Activated T-helper 1 cell treated with anti-CD3 and anti-CD28 coated beads, Interleukin-12 subunit alpha, Interleukin-12 subunit beta, Interleukin-2, Interleukin-4 antibody, amounts not matched to agents 30 ng/mL and 10 ng/mL and 1 ng/mL, durations not matched to agents 14 hours and 24 hours and 36 hours (primary cell): ENCODE measurements at regions of chr4 and their contacts with region 1.

Region 1: DNA sequence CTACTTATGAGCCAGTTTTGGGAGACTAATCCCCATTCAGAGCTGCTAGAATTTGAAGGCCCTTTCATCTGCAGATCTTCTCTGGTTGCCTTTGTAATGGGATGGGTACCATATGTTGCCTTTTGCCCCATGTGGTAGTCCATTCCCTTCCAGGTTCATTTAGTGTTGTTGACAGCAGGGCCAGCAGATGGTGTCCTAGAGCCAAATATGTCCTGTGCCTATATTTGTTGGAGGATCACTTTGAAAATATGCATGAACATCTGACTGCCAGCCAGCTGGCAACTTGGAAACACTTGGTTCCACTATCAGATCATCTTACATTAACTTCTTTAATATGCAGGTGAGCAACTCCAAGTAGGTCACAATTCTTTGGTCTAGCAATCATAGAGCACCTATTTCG is 30.4 kb downstream of the CFAP299 start:
- DNase-seq: peak; percentile 19
- H3K4me3 Mint-ChIP-seq: no peak overlapping the region
- H3K27ac Mint-ChIP-seq: no peak overlapping the region
- H3K4me1 Mint-ChIP-seq: no peaks in the 10 kb centered on the region
- H3K27me3 Mint-ChIP-seq: peaks cover 4% of the 10 kb centered on the region

Region 2: GRCh38 chr4:80343887-80344286 is 22.0 kb before region 1 on chr4:
- intact Hi-C with region 1: no loop called
- DNase-seq: no peak
- H3K4me3 Mint-ChIP-seq: no peak overlapping the region
- H3K27ac Mint-ChIP-seq: no peak overlapping the region
- H3K4me1 Mint-ChIP-seq: no peaks in the 10 kb centered on the region
- H3K27me3 Mint-ChIP-seq: peaks cover 12% of the 10 kb centered on the region

Region 3: GRCh38 chr4:80812145-80812544 is 446.2 kb after region 1 on chr4:
- intact Hi-C with region 1: loop called (anchors 10 kb)
- DNase-seq: no peak
- H3K4me3 Mint-ChIP-seq: no peak overlapping the region
- H3K27ac Mint-ChIP-seq: no peak overlapping the region
- H3K4me1 Mint-ChIP-seq: no peaks in the 10 kb centered on the region
- H3K27me3 Mint-ChIP-seq: no peaks in the 10 kb centered on the region

Region 4: DNA sequence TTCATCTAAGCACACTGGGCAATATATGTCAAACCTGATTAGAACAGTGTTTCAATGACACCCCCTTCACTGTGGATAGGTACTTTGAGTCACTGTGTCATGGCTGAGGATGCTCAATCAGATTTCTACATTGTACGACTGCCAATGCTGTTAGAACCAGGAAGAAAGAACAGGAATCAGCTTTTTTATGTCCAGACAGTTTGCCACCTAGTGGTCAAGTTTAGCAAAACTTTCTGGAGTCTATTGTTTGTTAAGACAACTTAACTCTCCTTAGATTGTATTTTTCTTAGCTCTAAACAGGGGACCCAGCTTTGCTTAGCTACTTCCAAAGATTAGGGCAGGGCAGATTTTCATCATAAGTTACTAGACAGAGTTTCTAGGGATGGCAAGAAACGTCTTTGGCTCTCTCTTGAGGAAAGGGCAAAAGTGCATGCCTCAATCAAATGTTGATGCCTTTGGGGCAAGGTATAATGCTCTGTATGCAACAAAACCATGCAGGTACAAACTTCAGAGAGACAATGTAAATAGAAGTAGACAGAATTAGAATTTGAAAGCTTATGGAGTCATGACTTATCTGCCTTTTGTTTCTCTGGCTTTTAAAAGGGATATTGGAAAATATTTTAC is 624.1 kb after region 1 on chr4:
- intact Hi-C with region 1: loop called (anchors 1 kb)
- DNase-seq: no peak
- H3K4me3 Mint-ChIP-seq: no peak overlapping the region
- H3K27ac Mint-ChIP-seq: no peak overlapping the region
- H3K4me1 Mint-ChIP-seq: no peaks in the 10 kb centered on the region
- H3K27me3 Mint-ChIP-seq: no peaks in the 10 kb centered on the region

Region 5: GRCh38 chr4:81040012-81040659 is 674.2 kb after region 1 on chr4:
- intact Hi-C with region 1: loop called (anchors 2 kb)
- DNase-seq: no peak
- H3K4me3 Mint-ChIP-seq: no peak overlapping the region
- H3K27ac Mint-ChIP-seq: no peak overlapping the region
- H3K4me1 Mint-ChIP-seq: no peaks in the 10 kb centered on the region
- H3K27me3 Mint-ChIP-seq: peaks cover 10% of the 10 kb centered on the region

Region 6: GRCh38 chr4:81351654-81352445 is 985.9 kb after region 1 on chr4:
- intact Hi-C with region 1: loop called (anchors 2 kb)
- DNase-seq: peak; percentile 34
- H3K4me3 Mint-ChIP-seq: no peak overlapping the region
- H3K27ac Mint-ChIP-seq: no peak overlapping the region
- H3K4me1 Mint-ChIP-seq: no peaks in the 10 kb centered on the region
- H3K27me3 Mint-ChIP-seq: peaks cover under 1% of the 10 kb centered on the region